CD4-positive, alpha-beta T cell (primary cell): ENCODE measurements at regions of chr18 and their contacts with region 1.

Region 1: DNA sequence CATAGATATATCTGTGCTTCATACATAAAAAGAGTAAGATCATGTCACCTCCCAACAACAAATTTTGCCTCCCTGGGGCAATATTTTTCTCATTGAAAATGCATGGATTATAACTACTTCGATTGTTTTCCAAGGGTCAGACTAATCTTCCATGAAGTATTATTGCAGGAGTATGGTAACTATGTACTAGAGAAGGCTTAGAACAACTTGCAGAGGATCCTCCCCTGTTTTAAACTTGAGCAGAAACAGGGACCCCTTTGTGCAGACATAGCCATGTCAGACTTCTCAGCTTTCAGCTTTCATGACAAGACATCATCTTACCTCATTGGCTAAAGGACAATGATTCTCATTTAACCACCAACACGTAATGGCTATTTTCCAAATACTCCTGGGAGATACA is 13.2 kb upstream of the RAB27B start:
- DNase-seq: no peak
- ATAC-seq: no peak
- H3K4me3 ChIP-seq: no peak overlapping the region
- H3K4me3 Mint-ChIP-seq: no peak overlapping the region
- H3K27ac ChIP-seq: no peak overlapping the region
- H3K27ac Mint-ChIP-seq: no peak overlapping the region
- H3K4me1 ChIP-seq: no peaks in the 10 kb centered on the region
- H3K4me1 Mint-ChIP-seq: peaks cover 11% of the 10 kb centered on the region
- H3K27me3 ChIP-seq: no peaks in the 10 kb centered on the region
- H3K27me3 Mint-ChIP-seq: no peaks in the 10 kb centered on the region
- CTCF ChIP-seq: no peak

Region 2: GRCh38 chr18:54712306-54712705 is 102.8 kb before region 1 on chr18:
- CTCF ChIA-PET with region 1: no interaction called
- POLR2A ChIA-PET with region 1: no interaction called
- intact Hi-C with region 1: loop called in 1 of 2 experiments (anchors 5 kb)
- DNase-seq: no peak
- ATAC-seq: no peak
- H3K4me3 ChIP-seq: no peak overlapping the region
- H3K4me3 Mint-ChIP-seq: no peak overlapping the region
- H3K27ac ChIP-seq: no peak overlapping the region
- H3K27ac Mint-ChIP-seq: no peak overlapping the region
- H3K4me1 ChIP-seq: peaks cover 13% of the 10 kb centered on the region
- H3K4me1 Mint-ChIP-seq: peaks cover 44% of the 10 kb centered on the region
- H3K27me3 ChIP-seq: no peaks in the 10 kb centered on the region
- H3K27me3 Mint-ChIP-seq: no peaks in the 10 kb centered on the region
- CTCF ChIP-seq: no peak

Region 3: GRCh38 chr18:54766619-54767018 is 48.5 kb before region 1 on chr18:
- CTCF ChIA-PET with region 1: no interaction called
- POLR2A ChIA-PET with region 1: no interaction called
- intact Hi-C with region 1: no loop called
- DNase-seq: no peak
- ATAC-seq: no peak
- H3K4me3 ChIP-seq: no peak overlapping the region
- H3K4me3 Mint-ChIP-seq: no peak overlapping the region
- H3K27ac ChIP-seq: no peak overlapping the region
- H3K27ac Mint-ChIP-seq: no peak overlapping the region
- H3K4me1 ChIP-seq: no peaks in the 10 kb centered on the region
- H3K4me1 Mint-ChIP-seq: no peaks in the 10 kb centered on the region
- H3K27me3 ChIP-seq: no peaks in the 10 kb centered on the region
- H3K27me3 Mint-ChIP-seq: no peaks in the 10 kb centered on the region
- CTCF ChIP-seq: no peak